Activated B cell treated with CpG ODN at 0.5 μM for 24 hours (primary cell): ENCODE measurements at regions of chr2 and their contacts with region 1.

Region 1: DNA sequence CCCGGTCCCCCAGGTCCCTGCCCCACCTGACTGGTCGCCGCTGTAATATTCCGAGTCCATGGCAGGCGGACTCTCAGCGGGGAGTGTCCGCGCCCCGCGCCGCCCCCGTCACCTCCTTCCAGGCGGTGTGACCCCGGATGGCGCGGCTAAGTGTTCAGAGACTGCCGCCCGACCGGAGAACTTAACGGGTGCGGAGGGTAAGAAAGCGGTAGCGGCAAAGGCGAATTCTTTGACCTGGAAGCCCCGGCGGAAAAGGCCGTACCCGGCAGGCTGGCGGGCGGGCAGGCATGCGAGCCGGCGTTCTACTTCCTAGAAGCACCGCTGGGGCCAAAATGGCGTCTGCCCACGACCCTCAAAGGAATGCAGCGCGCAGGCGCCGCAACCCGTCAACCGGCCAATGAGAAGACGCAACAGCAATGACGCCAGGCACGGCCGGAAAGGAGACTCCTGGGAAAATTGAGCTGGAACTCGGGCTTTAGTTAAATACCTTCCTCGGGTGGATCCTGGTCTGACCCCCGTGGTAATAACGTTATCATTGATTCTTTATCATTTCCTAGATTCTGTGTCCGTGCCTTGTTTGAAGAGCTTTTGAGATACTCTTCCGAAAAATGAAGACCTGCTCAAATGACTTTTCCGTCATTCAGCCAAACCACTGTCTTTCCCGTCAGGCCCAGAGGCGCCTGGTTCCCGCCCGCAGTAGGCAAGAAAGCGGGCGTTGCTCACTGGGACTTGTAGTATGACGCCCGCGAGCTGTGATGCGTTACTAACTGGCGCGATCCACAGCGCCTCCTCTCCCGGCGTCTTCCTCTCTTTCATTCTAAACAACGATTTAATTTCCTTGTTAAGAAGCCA is at the start of gene IWS1:
- DNase-seq: peak; percentile 85
- ATAC-seq: peak; percentile 86
- H3K4me3 Mint-ChIP-seq: peak within 1 kb of the TSS; percentile 95
- H3K27ac Mint-ChIP-seq: peak within 1 kb of the TSS; percentile 98
- H3K4me1 Mint-ChIP-seq: peaks cover 32% of the 10 kb centered on the region
- H3K27me3 Mint-ChIP-seq: no peaks in the 10 kb centered on the region
- CTCF ChIP-seq: no peak
- total RNA-seq, gene IWS1: 45.6 and 49.3 TPM in 2 replicates

Region 2: DNA sequence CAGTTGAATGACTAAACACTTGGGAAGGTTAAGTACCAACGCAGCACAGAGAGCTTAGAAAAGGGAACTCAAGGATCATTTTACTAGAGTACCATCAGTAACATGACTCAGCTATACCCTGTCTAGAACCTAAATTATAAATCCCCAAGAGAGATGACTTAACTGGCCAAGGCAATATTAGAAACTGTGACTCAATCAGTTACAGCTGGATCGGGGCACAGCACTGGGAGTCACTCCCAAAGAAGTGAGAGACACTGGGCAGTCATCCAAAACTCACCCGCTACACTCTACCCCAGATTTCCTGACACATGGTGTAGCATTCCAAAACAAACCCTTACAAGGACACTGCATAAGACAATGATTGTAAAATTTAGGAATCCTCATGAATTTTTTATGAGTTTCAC is 17.7 kb before region 1 on chr2:
- CTCF ChIA-PET with region 1: no interaction called
- POLR2A ChIA-PET with region 1: interaction called, 15 read pairs
- intact Hi-C with region 1: no loop called
- DNase-seq: no peak
- ATAC-seq: peak; percentile 80
- H3K4me3 Mint-ChIP-seq: no peak overlapping the region
- H3K27ac Mint-ChIP-seq: no peak overlapping the region
- H3K4me1 Mint-ChIP-seq: peaks cover 53% of the 10 kb centered on the region
- H3K27me3 Mint-ChIP-seq: no peaks in the 10 kb centered on the region
- CTCF ChIP-seq: no peak

Region 3: DNA sequence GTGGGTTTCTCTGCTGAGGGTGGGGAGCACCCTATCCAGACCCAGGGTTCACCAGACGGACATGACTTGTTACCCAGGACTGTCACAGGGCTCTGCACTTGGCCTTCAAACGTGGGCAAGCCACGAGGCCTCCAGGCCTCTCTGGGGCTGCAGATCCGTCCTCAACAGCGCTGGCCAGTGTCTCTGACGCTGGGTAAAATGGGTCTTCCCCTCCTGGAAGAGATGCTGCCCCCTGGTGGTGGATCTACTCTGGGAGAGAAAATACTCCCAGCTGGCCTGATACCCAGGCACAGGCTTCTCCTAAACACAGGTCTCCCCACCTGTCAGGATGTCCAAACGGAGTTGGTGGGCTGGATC is 123.3 kb after region 1 on chr2:
- CTCF ChIA-PET with region 1: interaction called, 8 read pairs
- POLR2A ChIA-PET with region 1: interaction called, 5 read pairs
- intact Hi-C with region 1: loop called (anchors 1 kb)
- DNase-seq: peak; percentile 68
- ATAC-seq: peak; percentile 80
- H3K4me3 Mint-ChIP-seq: peak overlapping the region; percentile 52
- H3K27ac Mint-ChIP-seq: no peak overlapping the region
- H3K4me1 Mint-ChIP-seq: peaks cover 63% of the 10 kb centered on the region
- H3K27me3 Mint-ChIP-seq: no peaks in the 10 kb centered on the region
- CTCF ChIP-seq: no peak

Region 4: DNA sequence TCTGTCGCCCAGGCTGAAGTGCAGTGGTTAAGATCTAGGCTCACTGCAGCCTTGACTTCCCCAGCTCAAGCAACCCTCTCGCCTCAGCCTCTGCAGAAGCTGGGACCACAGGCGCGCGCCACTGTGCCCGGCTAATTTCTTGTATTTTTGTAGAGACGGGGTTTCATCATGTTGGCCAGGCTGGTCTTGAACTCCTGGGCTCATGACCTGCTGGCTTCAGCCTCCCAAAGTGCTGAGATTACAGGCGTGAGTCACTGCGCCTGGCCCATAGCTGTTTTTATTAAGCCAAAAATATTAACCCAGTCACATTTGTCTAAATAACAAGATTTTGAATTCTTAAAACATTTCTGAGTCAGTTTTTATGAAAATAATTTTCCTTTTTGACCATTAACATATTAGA is 168.6 kb after region 1 on chr2:
- CTCF ChIA-PET with region 1: no interaction called
- POLR2A ChIA-PET with region 1: no interaction called
- intact Hi-C with region 1: no loop called
- DNase-seq: no peak
- ATAC-seq: no peak
- H3K4me3 Mint-ChIP-seq: no peak overlapping the region
- H3K27ac Mint-ChIP-seq: no peak overlapping the region
- H3K4me1 Mint-ChIP-seq: no peaks in the 10 kb centered on the region
- H3K27me3 Mint-ChIP-seq: no peaks in the 10 kb centered on the region
- CTCF ChIP-seq: no peak

Region 5: DNA sequence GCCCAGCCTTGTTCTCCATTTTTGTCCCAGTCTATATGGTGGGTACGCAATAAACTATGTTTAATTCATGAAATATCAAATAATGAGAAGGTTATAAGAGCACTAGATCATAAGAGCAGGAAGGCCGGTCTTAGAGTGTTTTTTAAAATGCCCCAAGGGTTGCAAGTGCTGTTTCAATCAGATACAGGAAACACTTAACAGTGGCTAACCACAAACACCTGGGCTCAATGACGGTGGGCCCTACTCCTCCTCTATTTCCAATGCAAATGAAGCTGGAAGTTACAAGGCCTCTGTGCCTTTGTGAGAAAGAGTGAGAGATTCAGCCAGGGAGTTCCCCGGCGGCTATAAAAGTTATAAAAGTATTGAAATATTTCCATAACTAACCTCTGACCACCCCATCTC is 303.5 kb after region 1 on chr2:
- CTCF ChIA-PET with region 1: no interaction called
- POLR2A ChIA-PET with region 1: no interaction called
- intact Hi-C with region 1: loop called (anchors 1 kb)
- DNase-seq: peak; percentile 57
- ATAC-seq: peak; percentile 94
- H3K4me3 Mint-ChIP-seq: peak overlapping the region; percentile 66
- H3K27ac Mint-ChIP-seq: peak overlapping the region; percentile 84
- H3K4me1 Mint-ChIP-seq: peaks cover 43% of the 10 kb centered on the region
- H3K27me3 Mint-ChIP-seq: peaks cover 12% of the 10 kb centered on the region
- CTCF ChIP-seq: no peak